Caco-2 (cell line): ENCODE measurements at regions of chr7 and their contacts with region 1.

Region 1: GRCh38 chr7:20647908-20648776 is 32.7 kb downstream of the ABCB5 start:
- DNase-seq: peak; percentile 62 to 64
- H3K4me3 ChIP-seq: no peak overlapping the region
- H3K4me3 Mint-ChIP-seq: no peak overlapping the region
- H3K27ac Mint-ChIP-seq: no peak overlapping the region
- H3K4me1 ChIP-seq: no peaks in the 10 kb centered on the region
- H3K4me1 Mint-ChIP-seq: peaks cover 7% of the 10 kb centered on the region
- H3K27me3 ChIP-seq: no peaks in the 10 kb centered on the region
- H3K27me3 Mint-ChIP-seq: no peaks in the 10 kb centered on the region
- CTCF ChIP-seq: peak; percentile 60 to 67

Region 2: DNA sequence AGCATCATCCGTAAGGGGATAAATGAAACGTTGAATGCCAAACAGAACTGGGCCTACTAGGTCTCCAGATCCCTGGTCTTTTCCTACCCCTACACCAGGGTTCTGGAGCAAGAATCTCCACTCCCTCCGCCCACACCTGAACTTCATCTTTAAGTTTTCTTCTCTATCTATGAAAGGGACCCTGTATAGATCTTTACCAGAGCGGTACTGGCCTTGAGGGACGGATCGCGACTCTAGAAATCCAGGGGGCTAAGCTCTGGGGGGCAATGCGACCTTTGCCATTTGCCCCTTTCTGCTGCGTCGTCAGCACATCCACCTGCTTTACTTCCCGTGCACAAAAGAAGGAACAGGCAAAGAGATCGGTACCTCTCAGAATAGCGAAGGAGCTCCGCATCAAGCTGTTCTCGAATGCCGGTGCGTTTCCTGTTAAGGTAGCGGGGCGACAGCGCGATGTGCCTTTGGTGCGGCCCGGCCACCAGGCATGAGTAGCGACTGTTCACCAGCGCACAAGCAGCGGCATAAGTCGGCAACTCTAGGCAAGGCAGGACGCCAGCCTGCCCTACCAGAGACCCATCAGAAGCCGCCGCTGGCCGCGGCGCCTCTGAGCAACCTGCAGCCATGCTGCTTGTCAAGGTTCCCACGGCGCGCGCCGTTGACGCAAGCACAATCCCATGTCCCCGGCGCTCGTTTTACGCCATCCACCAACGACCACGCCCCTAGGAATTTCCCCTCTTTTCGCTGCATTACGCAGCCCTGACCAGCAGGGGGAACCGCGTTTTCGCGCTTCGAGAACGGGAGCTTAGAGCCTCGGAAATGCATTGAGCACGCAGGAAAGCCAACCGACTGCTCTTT is 939.5 kb before region 1 on chr7 and contains the start of gene POLR1F:
- CTCF ChIA-PET with region 1: interaction called, 5 read pairs
- POLR2A ChIA-PET with region 1: no interaction called
- intact Hi-C with region 1: loop called (anchors 1 kb)
- DNase-seq: peak; percentile 93 to 97
- H3K4me3 ChIP-seq: peak within 1 kb of the TSS; percentile 77
- H3K4me3 Mint-ChIP-seq: peak within 1 kb of the TSS; percentile 95
- H3K27ac Mint-ChIP-seq: peak within 1 kb of the TSS; percentile 93
- H3K4me1 ChIP-seq: peaks cover 12% of the 10 kb centered on the region; the same call in 1 of the 2 replicates
- H3K4me1 Mint-ChIP-seq: peaks cover 28% of the 10 kb centered on the region
- H3K27me3 ChIP-seq: no peaks in the 10 kb centered on the region
- H3K27me3 Mint-ChIP-seq: no peaks in the 10 kb centered on the region
- CTCF ChIP-seq: peak; percentile 87 to 91
- total RNA-seq, gene POLR1F: 15.6 and 21.6 TPM in 2 replicates

Region 3: DNA sequence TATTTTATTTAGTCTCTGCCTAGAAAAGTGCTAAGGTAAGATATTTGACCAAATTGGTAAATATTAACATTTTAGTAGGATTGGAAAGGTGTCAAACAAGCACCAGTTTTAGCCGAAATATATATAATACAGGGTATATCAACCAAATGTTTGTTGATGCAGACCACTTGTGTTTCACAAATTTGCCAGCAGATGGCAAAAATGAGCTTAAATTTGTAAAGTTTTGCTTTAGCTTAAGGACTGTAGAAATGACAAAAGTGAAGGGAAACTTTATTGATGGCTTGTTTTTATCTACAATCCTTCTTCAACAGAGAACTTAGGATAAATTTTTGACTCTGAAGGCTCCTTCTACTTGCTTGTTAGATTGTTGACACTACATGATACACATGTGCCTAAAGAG is 934.5 kb before region 1 on chr7:
- CTCF ChIA-PET with region 1: interaction called, 5 read pairs
- POLR2A ChIA-PET with region 1: no interaction called
- intact Hi-C with region 1: loop called (anchors 1 kb)
- DNase-seq: peak in 1 of 2 experiments; percentile 55
- H3K4me3 ChIP-seq: no peak overlapping the region
- H3K4me3 Mint-ChIP-seq: no peak overlapping the region
- H3K27ac Mint-ChIP-seq: no peak overlapping the region
- H3K4me1 ChIP-seq: peaks cover 7% of the 10 kb centered on the region; the same call in 1 of the 2 replicates
- H3K4me1 Mint-ChIP-seq: peaks cover 14% of the 10 kb centered on the region
- H3K27me3 ChIP-seq: no peaks in the 10 kb centered on the region
- H3K27me3 Mint-ChIP-seq: no peaks in the 10 kb centered on the region
- CTCF ChIP-seq: peak; percentile 59 to 61

Region 4: GRCh38 chr7:20539201-20539600 is 108.9 kb before region 1 on chr7:
- CTCF ChIA-PET with region 1: no interaction called
- POLR2A ChIA-PET with region 1: no interaction called
- intact Hi-C with region 1: loop called (anchors 1 kb)
- DNase-seq: peak in 1 of 2 experiments; percentile 34
- H3K4me3 ChIP-seq: no peak overlapping the region
- H3K4me3 Mint-ChIP-seq: no peak overlapping the region
- H3K27ac Mint-ChIP-seq: no peak overlapping the region
- H3K4me1 ChIP-seq: no peaks in the 10 kb centered on the region
- H3K4me1 Mint-ChIP-seq: no peaks in the 10 kb centered on the region
- H3K27me3 ChIP-seq: no peaks in the 10 kb centered on the region
- H3K27me3 Mint-ChIP-seq: peaks cover 6% of the 10 kb centered on the region
- CTCF ChIP-seq: peak; percentile 31

Region 5: GRCh38 chr7:20834656-20835055 is 186.5 kb after region 1 on chr7:
- CTCF ChIA-PET with region 1: no interaction called
- POLR2A ChIA-PET with region 1: no interaction called
- intact Hi-C with region 1: loop called (anchors 10 kb)
- DNase-seq: peak in 1 of 2 experiments; percentile 19
- H3K4me3 ChIP-seq: peak overlapping the region; percentile 29; the same call in 1 of the 2 replicates
- H3K4me3 Mint-ChIP-seq: peak overlapping the region; percentile 68
- H3K27ac Mint-ChIP-seq: no peak overlapping the region
- H3K4me1 ChIP-seq: no peaks in the 10 kb centered on the region
- H3K4me1 Mint-ChIP-seq: peaks cover 12% of the 10 kb centered on the region
- H3K27me3 ChIP-seq: no peaks in the 10 kb centered on the region
- H3K27me3 Mint-ChIP-seq: peaks cover 3% of the 10 kb centered on the region
- CTCF ChIP-seq: peak; percentile 50 to 60